ENCODE measurements at regions of chr5 and their contacts with region 1.

Region 1: GRCh38 chr5:39148983-39149534 is 70.3 kb downstream of the FYB1 start:
- DNase-seq: peak in 1 of 2 experiments; percentile 20
- H3K4me3 ChIP-seq: no peak overlapping the region
- H3K4me3 Mint-ChIP-seq: no peak overlapping the region
- H3K27ac Mint-ChIP-seq: no peak overlapping the region
- H3K4me1 ChIP-seq: peaks cover 8% of the 10 kb centered on the region; the same call in 1 of the 2 replicates
- H3K4me1 Mint-ChIP-seq: peaks cover 11% of the 10 kb centered on the region
- H3K27me3 ChIP-seq: no peaks in the 10 kb centered on the region
- H3K27me3 Mint-ChIP-seq: no peaks in the 10 kb centered on the region
- CTCF ChIP-seq: peak in 1 of 2 experiments; percentile 19

Region 2: GRCh38 chr5:39074016-39074886 is 74.8 kb before region 1 on chr5 and contains the start of gene RICTOR:
- CTCF ChIA-PET with region 1: no interaction called
- POLR2A ChIA-PET with region 1: no interaction called
- intact Hi-C with region 1: no loop called
- DNase-seq: peak; percentile 89 to 92
- H3K4me3 ChIP-seq: peak within 1 kb of the TSS; percentile 83
- H3K4me3 Mint-ChIP-seq: peak within 1 kb of the TSS; percentile 95
- H3K27ac Mint-ChIP-seq: peak within 1 kb of the TSS; percentile 94
- H3K4me1 ChIP-seq: peaks cover 6% of the 10 kb centered on the region; the same call in 1 of the 2 replicates
- H3K4me1 Mint-ChIP-seq: no peaks in the 10 kb centered on the region
- H3K27me3 ChIP-seq: no peaks in the 10 kb centered on the region
- H3K27me3 Mint-ChIP-seq: no peaks in the 10 kb centered on the region
- CTCF ChIP-seq: no peak
- total RNA-seq, gene RICTOR: 25.2 and 25.7 TPM in 2 replicates

Region 3: GRCh38 chr5:39370555-39371366 is 221.7 kb after region 1 on chr5:
- CTCF ChIA-PET with region 1: interaction called, 3 read pairs
- POLR2A ChIA-PET with region 1: no interaction called
- intact Hi-C with region 1: loop called (anchors 5 kb)
- DNase-seq: peak; percentile 88 to 91
- H3K4me3 ChIP-seq: no peak overlapping the region
- H3K4me3 Mint-ChIP-seq: peak overlapping the region; percentile 56
- H3K27ac Mint-ChIP-seq: peak overlapping the region; percentile 72
- H3K4me1 ChIP-seq: peaks cover 35% of the 10 kb centered on the region
- H3K4me1 Mint-ChIP-seq: peaks cover 24% of the 10 kb centered on the region
- H3K27me3 ChIP-seq: no peaks in the 10 kb centered on the region
- H3K27me3 Mint-ChIP-seq: no peaks in the 10 kb centered on the region
- CTCF ChIP-seq: no peak

Region 4: DNA sequence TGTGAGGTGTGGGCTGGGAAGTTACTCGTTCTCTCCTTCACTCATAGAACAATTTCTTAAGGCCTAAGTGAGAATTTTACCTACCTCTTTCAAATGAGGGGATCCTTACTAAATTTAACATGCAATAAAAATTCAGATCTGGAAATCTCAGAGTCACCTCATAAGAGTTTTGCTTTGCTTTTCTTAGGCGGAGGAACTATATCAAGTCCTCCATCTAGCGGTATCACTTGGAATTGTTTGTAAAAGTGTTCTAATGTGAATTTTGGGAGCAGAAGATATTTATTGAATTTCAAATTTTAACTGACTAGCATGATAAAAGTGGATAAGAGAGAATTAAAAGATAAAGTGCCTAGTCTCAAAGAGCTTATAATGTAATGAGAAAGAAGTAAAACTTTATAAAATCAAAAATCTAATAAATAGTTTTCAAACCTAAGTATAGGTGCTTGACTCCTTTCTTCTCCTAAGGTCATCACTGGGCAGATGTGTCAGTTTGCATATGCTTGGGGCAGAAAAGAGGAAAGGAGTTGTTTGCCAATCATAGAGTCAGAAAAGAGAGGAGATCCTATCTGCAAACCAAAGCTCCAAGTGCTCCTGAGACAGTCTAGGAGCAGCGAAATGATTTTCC is 421.5 kb after region 1 on chr5:
- CTCF ChIA-PET with region 1: no interaction called
- POLR2A ChIA-PET with region 1: no interaction called
- intact Hi-C with region 1: loop called (anchors 1 kb)
- DNase-seq: peak in 1 of 2 experiments; percentile 34
- H3K4me3 ChIP-seq: no peak overlapping the region
- H3K4me3 Mint-ChIP-seq: no peak overlapping the region
- H3K27ac Mint-ChIP-seq: no peak overlapping the region
- H3K4me1 ChIP-seq: peaks cover 11% of the 10 kb centered on the region; the same call in 1 of the 2 replicates
- H3K4me1 Mint-ChIP-seq: no peaks in the 10 kb centered on the region
- H3K27me3 ChIP-seq: no peaks in the 10 kb centered on the region
- H3K27me3 Mint-ChIP-seq: no peaks in the 10 kb centered on the region
- CTCF ChIP-seq: peak; percentile 69 to 70